AG04449 (cell line): ENCODE measurements at regions of chr2 and their contacts with region 1.

Region 1: DNA sequence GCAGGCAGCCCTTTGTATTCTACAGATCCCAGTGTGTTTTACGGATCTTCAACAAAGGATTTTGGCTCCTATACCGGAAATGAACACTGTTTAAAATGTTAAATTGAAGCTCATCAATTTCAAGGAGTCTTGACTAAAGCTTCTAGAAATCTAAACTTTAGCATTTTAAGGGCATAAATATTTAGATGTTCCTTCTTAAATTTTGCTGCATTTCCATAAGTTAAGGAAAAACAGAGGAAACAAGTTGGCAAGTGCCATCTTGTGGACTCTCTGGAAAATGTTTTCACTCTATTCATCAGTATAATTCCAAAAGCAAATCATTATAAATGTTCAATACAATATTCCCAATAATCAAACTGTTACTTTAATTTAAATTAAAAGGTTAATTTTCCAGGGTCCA is 19.6 kb downstream of the CHN1 start:
- DNase-seq: no peak
- H3K4me3 ChIP-seq: no peak overlapping the region
- CTCF ChIP-seq: peak; percentile 39

Region 2: DNA sequence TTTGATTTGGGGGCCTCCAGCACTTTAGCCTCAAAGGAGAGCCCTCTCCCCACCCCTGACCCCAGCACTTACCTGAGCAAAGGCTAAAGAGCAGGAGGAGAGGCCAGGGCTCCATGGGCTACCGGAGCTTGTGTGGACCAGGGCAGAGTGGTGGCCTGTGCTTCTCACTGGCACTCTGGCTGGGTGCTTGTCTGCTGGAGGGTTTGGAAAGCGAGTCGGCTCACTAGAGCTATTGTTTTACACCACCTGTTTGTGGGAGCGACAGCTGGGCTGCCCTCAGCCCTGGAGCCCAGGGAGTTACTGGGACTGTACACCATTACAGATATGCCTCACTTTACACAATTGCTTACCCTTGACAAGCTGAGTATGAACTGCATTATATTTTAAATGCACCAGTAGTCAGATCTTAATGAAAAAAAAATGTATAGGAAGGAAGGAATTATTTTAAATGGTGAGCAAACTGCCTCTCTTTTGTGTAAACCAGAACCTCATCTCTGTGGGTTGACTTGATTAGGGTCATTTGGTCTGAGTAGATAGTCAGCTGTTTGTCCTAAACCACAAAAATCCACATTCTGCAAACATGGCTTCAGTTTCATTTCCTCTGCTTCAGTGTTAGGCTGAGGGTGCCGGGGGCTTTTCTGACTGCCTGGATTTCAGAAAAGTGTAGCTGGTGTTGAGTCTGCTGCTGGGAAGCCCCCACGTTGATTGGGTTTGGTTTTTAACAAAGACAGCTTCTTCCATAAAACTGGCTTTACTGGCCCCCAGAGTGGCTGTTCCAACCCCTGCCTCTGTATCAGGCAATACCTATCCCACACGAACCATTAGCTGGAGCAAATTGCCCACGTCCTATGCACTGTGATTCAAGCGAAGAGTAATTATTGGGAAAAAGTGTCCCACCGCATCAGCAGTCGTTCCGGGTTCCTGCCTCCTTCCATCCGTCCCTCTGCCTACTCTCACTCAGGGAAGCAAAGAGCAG is 221.1 kb before region 1 on chr2 and contains the start of gene CHRNA1:
- CTCF ChIA-PET with region 1: interaction called, 417 read pairs
- POLR2A ChIA-PET with region 1: no interaction called
- DNase-seq: no peak
- H3K4me3 ChIP-seq: no peak within 1 kb of the TSS
- CTCF ChIP-seq: no peak

Region 3: DNA sequence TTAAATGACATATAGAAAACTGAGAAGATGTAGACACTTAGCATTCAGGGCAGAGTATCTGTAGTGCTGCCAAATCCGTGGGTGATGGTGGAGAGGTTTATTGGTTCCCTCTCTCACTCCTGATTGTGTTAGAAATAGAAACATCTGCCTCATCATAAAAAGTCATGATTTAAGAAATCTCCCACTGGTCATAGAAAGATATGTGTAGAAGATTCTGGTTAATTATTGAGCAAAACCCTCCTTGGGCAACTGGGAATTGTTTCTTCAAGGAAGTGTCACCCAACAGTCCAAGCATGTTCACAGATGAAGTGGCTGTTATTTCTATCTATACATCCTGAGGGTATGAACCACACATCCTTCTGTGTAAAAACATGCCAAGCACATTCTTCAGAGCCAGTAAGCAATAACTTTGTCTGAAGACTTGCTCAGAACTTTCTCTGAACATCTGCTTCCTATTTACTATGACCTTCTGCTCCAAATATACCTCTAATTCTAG is 187.8 kb before region 1 on chr2:
- CTCF ChIA-PET with region 1: interaction called, 15 read pairs
- POLR2A ChIA-PET with region 1: no interaction called
- DNase-seq: peak; percentile 80
- H3K4me3 ChIP-seq: no peak overlapping the region
- CTCF ChIP-seq: no peak

Region 4: GRCh38 chr2:174812037-174812436 is 173.6 kb before region 1 on chr2:
- CTCF ChIA-PET with region 1: interaction called, 15 read pairs
- POLR2A ChIA-PET with region 1: no interaction called
- DNase-seq: no peak
- H3K4me3 ChIP-seq: no peak overlapping the region
- CTCF ChIP-seq: no peak

Region 5: DNA sequence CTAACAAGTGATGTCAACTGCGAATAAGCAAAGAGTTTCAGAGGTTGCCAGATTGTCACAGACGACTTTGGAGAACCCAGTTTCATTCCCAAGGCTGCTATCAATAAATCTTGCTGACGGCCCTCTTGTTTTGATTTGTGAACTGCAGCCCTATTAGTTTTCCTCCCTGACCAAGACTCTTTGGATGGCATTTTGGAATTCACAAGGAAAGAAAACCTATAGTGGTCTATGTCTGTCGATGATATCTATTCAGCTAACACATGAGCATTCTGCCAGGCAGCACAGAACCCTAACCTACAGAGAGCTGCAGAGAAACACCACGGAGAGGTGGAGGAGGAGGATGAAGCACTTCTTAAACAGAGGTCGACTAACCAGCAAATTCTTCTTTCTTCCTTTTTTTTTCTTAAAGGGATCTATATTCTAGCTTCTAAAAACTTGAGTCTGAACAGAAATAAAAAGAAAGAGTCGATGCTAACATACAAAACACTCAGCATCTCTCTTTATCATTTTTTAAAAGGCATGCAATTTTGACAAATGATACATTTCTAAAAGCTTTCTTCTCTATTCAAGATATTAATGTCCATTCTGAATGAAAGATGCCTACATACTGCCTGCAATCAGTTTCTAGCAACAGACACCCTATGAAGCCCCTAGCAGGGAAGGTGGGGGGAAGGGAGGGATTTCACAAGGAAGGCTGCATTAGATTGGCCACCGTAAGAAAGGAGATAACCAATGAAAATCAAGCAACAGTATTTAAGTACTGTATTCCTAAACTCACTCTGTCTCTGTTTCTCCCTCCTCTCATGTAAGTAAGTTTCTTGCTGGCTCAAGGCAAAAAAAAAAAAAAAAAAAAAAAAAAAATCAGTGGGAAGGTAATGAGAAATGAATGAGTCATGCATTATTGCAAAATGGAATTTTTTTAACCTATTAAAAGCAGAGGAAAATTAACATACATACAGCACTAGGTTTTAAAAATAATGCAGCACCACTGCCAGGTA is 138.4 kb before region 1 on chr2:
- CTCF ChIA-PET with region 1: interaction called, 18 read pairs
- POLR2A ChIA-PET with region 1: no interaction called
- DNase-seq: peak; percentile 82
- H3K4me3 ChIP-seq: peak overlapping the region; percentile 57
- CTCF ChIP-seq: no peak

Region 6: GRCh38 chr2:174965992-174966744 is 19.5 kb before region 1 on chr2:
- CTCF ChIA-PET with region 1: interaction called, 15 read pairs
- POLR2A ChIA-PET with region 1: no interaction called
- DNase-seq: no peak
- H3K4me3 ChIP-seq: no peak overlapping the region
- CTCF ChIP-seq: no peak

Region 7: DNA sequence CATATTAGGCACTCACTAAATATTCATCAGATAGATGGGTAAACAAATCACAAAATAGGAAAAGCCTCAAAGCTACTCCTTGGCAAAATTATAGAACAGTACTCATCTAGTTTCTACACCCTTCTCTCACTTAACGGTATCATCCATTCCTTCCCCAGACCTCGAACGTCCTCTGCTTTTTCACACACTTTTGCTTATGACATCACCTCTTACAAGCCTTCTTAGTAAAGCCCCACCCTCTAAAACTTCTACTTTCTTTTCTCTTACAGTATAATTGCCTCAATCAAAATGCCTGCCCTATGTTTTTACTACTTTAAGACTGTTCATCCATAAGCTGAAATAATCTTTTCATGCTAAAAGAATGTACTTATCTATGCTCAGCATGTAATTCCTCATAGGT is 11.5 kb after region 1 on chr2:
- CTCF ChIA-PET with region 1: interaction called, 12 read pairs
- POLR2A ChIA-PET with region 1: no interaction called
- DNase-seq: no peak
- H3K4me3 ChIP-seq: no peak overlapping the region
- CTCF ChIP-seq: no peak